Activated T-helper 1 cell treated with anti-CD3 and anti-CD28 coated beads, Interleukin-12 subunit alpha, Interleukin-12 subunit beta, Interleukin-2, Interleukin-4 antibody, amounts not matched to agents 30 ng/mL and 10 ng/mL and 1 ng/mL, durations not matched to agents 14 hours and 24 hours and 36 hours (primary cell): ENCODE measurements at regions of chr10 and their contacts with region 1.

Region 1: DNA sequence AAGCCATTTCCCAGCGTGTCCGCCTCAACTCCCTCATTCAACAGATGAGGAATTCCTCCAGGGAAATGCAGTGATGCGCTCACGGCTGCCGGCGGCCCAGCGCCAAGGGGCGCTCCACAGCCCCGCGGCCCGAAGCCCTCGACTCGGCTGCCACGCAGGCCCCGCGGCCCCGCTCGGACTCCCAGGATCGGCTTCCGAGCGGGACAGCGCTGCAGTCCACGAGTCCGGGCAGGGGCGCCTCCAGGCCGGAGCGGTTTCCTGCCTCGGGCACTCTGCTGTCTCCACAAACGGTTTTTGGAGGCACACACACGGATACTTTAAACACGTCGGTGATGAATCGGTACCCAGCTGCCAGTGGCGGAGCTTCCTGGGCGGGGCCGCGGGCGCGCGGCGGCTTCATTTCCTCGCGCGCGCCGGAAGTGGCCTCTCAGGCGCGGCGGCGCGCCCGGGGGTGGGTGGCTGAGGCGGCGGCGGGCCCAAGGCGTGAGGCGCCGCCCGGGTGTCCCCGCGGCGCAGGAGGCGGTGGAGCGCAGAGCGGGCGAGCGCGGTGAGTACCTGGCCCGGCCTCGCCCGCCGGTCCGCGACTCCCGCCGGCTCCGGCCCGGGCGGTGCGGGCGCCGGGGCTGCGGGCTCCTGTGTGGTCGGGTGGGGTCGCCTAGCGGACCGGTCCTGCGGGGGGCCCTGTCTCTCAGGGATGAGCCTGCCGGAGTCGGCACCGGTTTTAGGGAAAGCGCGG is at the start of gene CSGALNACT2:
- DNase-seq: peak; percentile 90
- H3K4me3 Mint-ChIP-seq: peak within 1 kb of the TSS; percentile 98
- H3K27ac Mint-ChIP-seq: peak within 1 kb of the TSS; percentile 98
- H3K4me1 Mint-ChIP-seq: peaks cover 71% of the 10 kb centered on the region
- H3K27me3 Mint-ChIP-seq: peaks cover 2% of the 10 kb centered on the region
- total RNA-seq, gene CSGALNACT2: 30.3 and 32.0 TPM in 2 replicates

Region 2: GRCh38 chr10:42638055-42638820 is 500.0 kb before region 1 on chr10 and contains the start of gene ZNF33B:
- intact Hi-C with region 1: loop called (anchors 1 kb)
- DNase-seq: peak; percentile 94
- H3K4me3 Mint-ChIP-seq: peak within 1 kb of the TSS; percentile 98
- H3K27ac Mint-ChIP-seq: peak within 1 kb of the TSS; percentile 98
- H3K4me1 Mint-ChIP-seq: peaks cover 21% of the 10 kb centered on the region
- H3K27me3 Mint-ChIP-seq: peaks cover 1% of the 10 kb centered on the region
- total RNA-seq, gene ZNF33B: 7.6 and 7.9 TPM in 2 replicates

Region 3: GRCh38 chr10:42883993-42884983 is 253.9 kb before region 1 on chr10:
- intact Hi-C with region 1: no loop called
- DNase-seq: no peak
- H3K4me3 Mint-ChIP-seq: no peak overlapping the region
- H3K27ac Mint-ChIP-seq: no peak overlapping the region
- H3K4me1 Mint-ChIP-seq: no peaks in the 10 kb centered on the region
- H3K27me3 Mint-ChIP-seq: peaks cover 10% of the 10 kb centered on the region

Region 4: GRCh38 chr10:43105102-43105785 is 32.9 kb before region 1 on chr10:
- intact Hi-C with region 1: loop called (anchors 2 kb)
- DNase-seq: peak; percentile 77
- H3K4me3 Mint-ChIP-seq: peak overlapping the region; percentile 73
- H3K27ac Mint-ChIP-seq: no peak overlapping the region
- H3K4me1 Mint-ChIP-seq: peaks cover 12% of the 10 kb centered on the region
- H3K27me3 Mint-ChIP-seq: peaks cover 21% of the 10 kb centered on the region

Region 5: DNA sequence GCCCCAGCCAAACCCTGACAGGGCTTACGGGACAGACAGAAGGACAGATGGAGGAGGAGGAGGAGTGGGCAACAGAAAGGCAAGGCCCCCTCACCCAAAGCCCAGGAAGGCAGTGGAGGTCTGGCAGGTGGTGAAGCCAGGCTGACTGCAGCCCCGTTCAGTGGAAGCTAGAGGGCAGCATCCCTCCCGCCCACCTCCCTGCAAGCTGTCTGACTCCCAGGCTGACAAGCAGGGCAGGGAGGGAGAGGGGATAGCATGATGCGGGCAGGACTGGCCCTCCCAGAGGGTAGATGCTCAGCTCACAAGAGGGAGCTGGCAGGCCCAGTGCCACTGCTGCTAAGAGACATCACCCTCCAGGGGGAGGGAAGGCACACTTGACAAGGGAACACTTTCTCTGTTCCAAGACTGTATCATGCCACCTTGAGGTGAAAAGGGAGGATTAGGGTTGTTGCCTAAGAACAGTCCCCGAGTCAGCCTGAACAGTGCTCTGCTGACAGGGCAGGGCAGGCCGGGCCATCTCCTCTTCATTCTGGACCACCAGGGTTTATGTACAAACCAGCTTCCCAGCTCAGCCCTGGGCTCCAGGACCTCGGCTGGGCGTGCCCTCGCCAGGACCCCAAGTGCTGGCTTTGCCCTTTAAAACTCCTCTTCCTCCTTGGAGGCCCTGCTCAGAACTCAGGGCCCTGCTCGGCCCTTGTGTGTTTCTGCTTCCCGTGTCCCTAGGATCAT is 66.9 kb after region 1 on chr10:
- intact Hi-C with region 1: loop called (anchors 1 kb)
- DNase-seq: peak; percentile 36
- H3K4me3 Mint-ChIP-seq: no peak overlapping the region
- H3K27ac Mint-ChIP-seq: no peak overlapping the region
- H3K4me1 Mint-ChIP-seq: no peaks in the 10 kb centered on the region
- H3K27me3 Mint-ChIP-seq: no peaks in the 10 kb centered on the region

Region 6: GRCh38 chr10:43292755-43293676 is 154.8 kb after region 1 on chr10:
- intact Hi-C with region 1: no loop called
- DNase-seq: no peak
- H3K4me3 Mint-ChIP-seq: peak overlapping the region; percentile 9
- H3K27ac Mint-ChIP-seq: peak overlapping the region; percentile 73
- H3K4me1 Mint-ChIP-seq: peaks cover 86% of the 10 kb centered on the region
- H3K27me3 Mint-ChIP-seq: peaks cover 9% of the 10 kb centered on the region

Region 7: GRCh38 chr10:43396928-43397624 is 258.9 kb after region 1 on chr10:
- intact Hi-C with region 1: loop called (anchors 2 kb)
- DNase-seq: peak; percentile 81
- H3K4me3 Mint-ChIP-seq: peak overlapping the region; percentile 90
- H3K27ac Mint-ChIP-seq: peak overlapping the region; percentile 94
- H3K4me1 Mint-ChIP-seq: peaks cover 83% of the 10 kb centered on the region
- H3K27me3 Mint-ChIP-seq: no peaks in the 10 kb centered on the region

Region 8: DNA sequence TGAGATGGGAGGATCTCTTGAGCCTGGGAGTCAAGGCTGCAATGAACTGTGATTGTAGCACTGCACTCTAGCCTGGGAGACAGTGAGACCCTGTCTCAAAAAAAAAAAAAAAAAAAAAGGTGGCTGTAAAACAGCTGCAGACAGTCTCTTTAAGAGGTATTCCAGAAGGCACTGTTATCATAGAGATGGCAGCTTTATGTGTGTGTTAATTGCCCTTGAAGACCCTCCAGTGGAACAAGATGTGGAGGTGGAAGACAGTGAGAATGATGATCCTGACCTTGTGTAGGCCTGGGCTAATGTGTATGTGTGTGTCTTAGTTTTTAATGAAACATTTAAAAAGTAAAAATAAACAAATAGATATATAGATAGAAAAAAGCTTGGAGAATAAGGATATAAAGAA is 364.7 kb after region 1 on chr10:
- intact Hi-C with region 1: no loop called
- DNase-seq: no peak
- H3K4me3 Mint-ChIP-seq: no peak overlapping the region
- H3K27ac Mint-ChIP-seq: no peak overlapping the region
- H3K4me1 Mint-ChIP-seq: no peaks in the 10 kb centered on the region
- H3K27me3 Mint-ChIP-seq: no peaks in the 10 kb centered on the region